HCT116 (cell line): ENCODE measurements at regions of chr19 and their contacts with region 1.

Region 1: DNA sequence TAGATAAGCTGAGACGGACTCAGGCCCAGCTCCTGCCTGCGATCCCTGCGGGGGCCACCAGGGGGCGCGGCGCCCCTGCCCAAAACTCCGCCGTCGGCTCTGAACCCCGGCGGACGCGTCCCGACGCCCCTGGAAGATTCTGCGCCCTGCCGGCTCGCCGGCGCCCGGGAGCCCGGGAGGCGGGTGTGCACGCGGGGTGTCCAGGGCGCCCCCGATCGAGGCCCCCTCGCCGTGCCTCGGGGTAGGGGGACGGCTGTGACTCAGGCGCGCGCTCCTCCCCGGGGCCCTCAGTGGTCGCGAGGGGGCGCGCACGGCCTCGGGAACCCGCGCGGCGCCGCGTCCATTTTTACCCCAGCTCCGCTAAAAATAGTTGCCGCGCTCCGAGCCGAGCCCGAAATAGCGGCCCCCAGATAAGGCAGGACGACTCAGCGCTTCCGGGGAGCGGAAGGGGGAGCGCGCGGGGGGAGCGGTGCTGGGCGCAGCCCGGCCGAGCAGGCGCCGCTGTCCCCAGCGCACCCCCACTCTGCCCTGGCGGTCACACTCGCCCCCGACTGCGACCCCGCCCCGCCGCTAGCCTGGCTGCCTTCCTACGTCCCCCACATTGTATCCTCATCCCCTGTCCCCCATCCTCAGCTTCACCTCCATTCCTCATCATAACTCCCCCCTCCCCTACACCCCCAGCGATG is 16.0 kb upstream of the ERCC1 start:
- DNase-seq: no peak
- ATAC-seq: peak; percentile 48
- H3K4me3 ChIP-seq: peak overlapping the region; percentile 34 to 63
- H3K27ac ChIP-seq: peak overlapping the region; percentile 81
- H3K4me1 ChIP-seq: peaks cover 23 to 44% of the 10 kb centered on the region in 2 experiments
- H3K27me3 ChIP-seq: no peaks in the 10 kb centered on the region
- CTCF ChIP-seq: peak; percentile 88 to 98 (median 96)
- POLR2A ChIP-seq: no peak
- RAD21 ChIP-seq: peak; percentile 87

Region 2: DNA sequence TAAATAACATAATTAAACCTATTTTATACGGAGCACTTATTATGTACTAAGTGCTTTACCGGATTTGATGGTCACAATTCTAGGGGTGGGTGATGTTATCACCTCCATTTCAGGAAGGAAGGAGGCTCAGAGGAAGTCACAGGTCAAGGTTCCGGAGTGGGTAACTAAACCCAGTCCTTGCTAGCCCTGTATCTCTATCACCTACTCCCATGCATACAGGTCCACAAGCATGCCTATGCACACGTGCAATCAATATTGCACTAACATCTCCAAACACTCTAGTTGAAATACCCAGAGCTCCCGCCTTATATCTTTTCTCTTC is 10.3 kb after region 1 on chr19:
- CTCF ChIA-PET with region 1: interaction called, 11 read pairs
- POLR2A ChIA-PET with region 1: interaction called, 4 read pairs
- RAD21 ChIA-PET with region 1: no interaction called
- intact Hi-C with region 1: no loop called
- DNase-seq: no peak
- ATAC-seq: peak; percentile 61
- H3K4me3 ChIP-seq: peak overlapping the region; percentile 49 to 58
- H3K27ac ChIP-seq: peak overlapping the region; percentile 38
- H3K4me1 ChIP-seq: peaks cover 32 to 64% of the 10 kb centered on the region in 2 experiments
- H3K27me3 ChIP-seq: no peaks in the 10 kb centered on the region
- CTCF ChIP-seq: no peak
- POLR2A ChIP-seq: no peak
- RAD21 ChIP-seq: no peak

Region 3: GRCh38 chr19:45469132-45469944 is 29.6 kb after region 1 on chr19:
- CTCF ChIA-PET with region 1: interaction called, 37 read pairs
- POLR2A ChIA-PET with region 1: interaction called, 27 read pairs
- RAD21 ChIA-PET with region 1: interaction called in 1 of 2 experiments, 5 read pairs
- intact Hi-C with region 1: no loop called
- DNase-seq: peak; percentile 76
- ATAC-seq: peak; percentile 80
- H3K4me3 ChIP-seq: peak overlapping the region; percentile 74 to 97
- H3K27ac ChIP-seq: peak overlapping the region; percentile 78
- H3K4me1 ChIP-seq: peaks cover 4 to 43% of the 10 kb centered on the region in 2 experiments
- H3K27me3 ChIP-seq: no peaks in the 10 kb centered on the region
- CTCF ChIP-seq: no peak
- POLR2A ChIP-seq: no peak
- RAD21 ChIP-seq: no peak

Region 4: GRCh38 chr19:45485305-45486077 is 45.8 kb after region 1 on chr19:
- CTCF ChIA-PET with region 1: interaction called, 189 read pairs
- POLR2A ChIA-PET with region 1: interaction called, 4 read pairs
- RAD21 ChIA-PET with region 1: interaction called in 1 of 2 experiments, 6 read pairs
- intact Hi-C with region 1: no loop called
- DNase-seq: peak; percentile 91
- ATAC-seq: peak; percentile 95
- H3K4me3 ChIP-seq: peak overlapping the region; percentile 41 to 51
- H3K27ac ChIP-seq: peak overlapping the region; percentile 44; the same call in 1 of the 2 replicates
- H3K4me1 ChIP-seq: peaks cover 13 to 28% of the 10 kb centered on the region in 2 experiments
- H3K27me3 ChIP-seq: no peaks in the 10 kb centered on the region
- CTCF ChIP-seq: peak; percentile 68 to 94 (median 86)
- POLR2A ChIP-seq: no peak
- RAD21 ChIP-seq: peak; percentile 64